ENCODE measurements at regions of chr4 and their contacts with region 1.

Region 1: DNA sequence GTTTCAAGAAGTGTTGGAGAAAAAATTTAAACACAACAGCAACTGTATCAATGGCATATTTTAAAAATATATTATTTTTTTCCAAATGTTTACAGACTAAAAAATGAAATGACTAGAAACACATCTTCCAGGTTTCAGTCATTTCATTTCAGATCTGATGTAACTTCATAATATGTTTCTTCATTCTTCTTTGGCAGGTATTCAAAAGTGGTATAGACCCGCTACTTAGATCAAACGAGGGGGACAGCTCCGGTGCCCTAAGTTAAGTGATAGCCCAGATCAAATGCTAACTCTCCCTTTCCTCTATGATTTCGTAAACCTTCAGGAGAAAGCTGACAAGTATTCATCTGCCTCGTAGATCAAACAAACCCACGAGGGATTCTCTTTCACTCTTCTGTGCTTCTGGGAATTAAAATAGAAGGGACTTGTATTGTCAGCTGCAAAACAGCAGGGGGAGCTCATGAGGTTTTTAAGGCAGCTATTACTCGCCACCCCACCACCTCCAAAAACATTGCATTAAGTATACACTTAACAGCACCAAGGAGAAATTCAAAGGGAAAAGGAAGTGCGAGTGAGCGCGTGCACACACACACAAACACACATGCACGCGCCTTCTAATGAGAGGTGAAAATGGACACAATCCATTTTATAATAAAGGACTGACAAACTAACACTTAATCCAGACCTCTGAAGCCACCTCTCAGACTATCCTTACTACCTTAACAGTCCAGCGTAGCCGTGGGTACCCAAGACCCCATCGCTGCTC is 21.4 kb downstream of the HELT start:
- DNase-seq: peak in 12 of 14 experiments; percentile 6 to 73 (median 22)
- ATAC-seq: peak; percentile 72
- H3K4me3 ChIP-seq: no peak overlapping the region
- H3K4me3 Mint-ChIP-seq: no peak overlapping the region
- H3K27ac ChIP-seq: no peak overlapping the region
- H3K27ac Mint-ChIP-seq: no peak overlapping the region
- H3K4me1 ChIP-seq: peaks cover 3% of the 10 kb centered on the region
- H3K4me1 Mint-ChIP-seq: peaks cover 5% of the 10 kb centered on the region
- H3K27me3 ChIP-seq: peaks cover 0 to 2% of the 10 kb centered on the region in 2 experiments
- H3K27me3 Mint-ChIP-seq: peaks cover 23% of the 10 kb centered on the region
- CTCF ChIP-seq: peak; percentile 79

Region 2: GRCh38 chr4:184896868-184897715 is 142.6 kb before region 1 on chr4:
- CTCF ChIA-PET with region 1: no interaction called
- POLR2A ChIA-PET with region 1: no interaction called
- intact Hi-C with region 1: no loop called
- DNase-seq: peak in 2 of 14 experiments; percentile 60 to 73
- ATAC-seq: no peak
- H3K4me3 ChIP-seq: no peak overlapping the region
- H3K4me3 Mint-ChIP-seq: no peak overlapping the region
- H3K27ac ChIP-seq: no peak overlapping the region
- H3K27ac Mint-ChIP-seq: no peak overlapping the region
- H3K4me1 ChIP-seq: peaks cover 3% of the 10 kb centered on the region
- H3K4me1 Mint-ChIP-seq: no peaks in the 10 kb centered on the region
- H3K27me3 ChIP-seq: peaks cover 6 to 7% of the 10 kb centered on the region in 2 experiments
- H3K27me3 Mint-ChIP-seq: peaks cover 19% of the 10 kb centered on the region
- CTCF ChIP-seq: no peak

Region 3: GRCh38 chr4:185096032-185096653 is 56.5 kb after region 1 on chr4:
- CTCF ChIA-PET with region 1: interaction called, 3 read pairs
- POLR2A ChIA-PET with region 1: no interaction called
- intact Hi-C with region 1: loop called in 1 of 2 experiments (anchors 5 kb)
- DNase-seq: peak in 5 of 14 experiments; percentile 4 to 49 (median 36)
- ATAC-seq: no peak
- H3K4me3 ChIP-seq: no peak overlapping the region
- H3K4me3 Mint-ChIP-seq: no peak overlapping the region
- H3K27ac ChIP-seq: no peak overlapping the region
- H3K27ac Mint-ChIP-seq: no peak overlapping the region
- H3K4me1 ChIP-seq: no peaks in the 10 kb centered on the region
- H3K4me1 Mint-ChIP-seq: no peaks in the 10 kb centered on the region
- H3K27me3 ChIP-seq: peaks cover 11 to 15% of the 10 kb centered on the region in 2 experiments
- H3K27me3 Mint-ChIP-seq: peaks cover 47% of the 10 kb centered on the region
- CTCF ChIP-seq: peak; percentile 57

Region 4: GRCh38 chr4:185134307-185134869 is 94.7 kb after region 1 on chr4:
- CTCF ChIA-PET with region 1: interaction called, 5 read pairs
- POLR2A ChIA-PET with region 1: interaction called, 6 read pairs
- intact Hi-C with region 1: loop called (anchors 1 to 5 kb)
- DNase-seq: peak in 3 of 14 experiments; percentile 55 to 71 (median 66)
- ATAC-seq: peak; percentile 66
- H3K4me3 ChIP-seq: no peak overlapping the region
- H3K4me3 Mint-ChIP-seq: no peak overlapping the region
- H3K27ac ChIP-seq: no peak overlapping the region
- H3K27ac Mint-ChIP-seq: no peak overlapping the region
- H3K4me1 ChIP-seq: no peaks in the 10 kb centered on the region
- H3K4me1 Mint-ChIP-seq: no peaks in the 10 kb centered on the region
- H3K27me3 ChIP-seq: peaks cover 6 to 7% of the 10 kb centered on the region in 2 experiments
- H3K27me3 Mint-ChIP-seq: peaks cover 62% of the 10 kb centered on the region
- CTCF ChIP-seq: peak; percentile 87

Region 5: DNA sequence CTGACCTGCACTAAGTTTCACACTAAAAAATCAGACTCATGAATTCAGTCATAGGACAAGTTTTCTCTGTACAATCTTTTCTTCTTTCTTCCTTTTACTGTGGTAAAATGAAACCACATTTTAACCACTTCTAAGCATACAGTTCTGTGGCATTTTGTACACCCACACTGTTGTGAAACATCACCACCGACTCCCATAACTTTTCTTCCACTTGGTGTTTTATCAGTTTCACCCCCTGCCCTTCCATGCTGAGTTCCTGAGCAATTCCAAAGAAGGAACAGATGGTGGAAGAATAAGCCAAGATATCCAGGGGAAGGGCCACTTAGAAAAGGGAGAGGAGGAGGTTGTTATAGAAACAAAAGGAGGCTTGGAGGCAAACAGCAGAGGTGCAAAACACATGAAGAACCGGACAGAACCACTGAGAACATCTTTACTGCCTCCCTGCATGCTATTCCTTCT is 125.9 kb after region 1 on chr4:
- CTCF ChIA-PET with region 1: no interaction called
- POLR2A ChIA-PET with region 1: no interaction called
- intact Hi-C with region 1: no loop called
- DNase-seq: peak in 3 of 14 experiments; percentile 66 to 75 (median 71)
- ATAC-seq: peak; percentile 88
- H3K4me3 ChIP-seq: no peak overlapping the region
- H3K4me3 Mint-ChIP-seq: peak overlapping the region; percentile 49
- H3K27ac ChIP-seq: no peak overlapping the region
- H3K27ac Mint-ChIP-seq: peak overlapping the region; percentile 60
- H3K4me1 ChIP-seq: peaks cover 10% of the 10 kb centered on the region
- H3K4me1 Mint-ChIP-seq: peaks cover 31% of the 10 kb centered on the region
- H3K27me3 ChIP-seq: no peaks in the 10 kb centered on the region
- H3K27me3 Mint-ChIP-seq: peaks cover 12% of the 10 kb centered on the region
- CTCF ChIP-seq: no peak

Region 6: DNA sequence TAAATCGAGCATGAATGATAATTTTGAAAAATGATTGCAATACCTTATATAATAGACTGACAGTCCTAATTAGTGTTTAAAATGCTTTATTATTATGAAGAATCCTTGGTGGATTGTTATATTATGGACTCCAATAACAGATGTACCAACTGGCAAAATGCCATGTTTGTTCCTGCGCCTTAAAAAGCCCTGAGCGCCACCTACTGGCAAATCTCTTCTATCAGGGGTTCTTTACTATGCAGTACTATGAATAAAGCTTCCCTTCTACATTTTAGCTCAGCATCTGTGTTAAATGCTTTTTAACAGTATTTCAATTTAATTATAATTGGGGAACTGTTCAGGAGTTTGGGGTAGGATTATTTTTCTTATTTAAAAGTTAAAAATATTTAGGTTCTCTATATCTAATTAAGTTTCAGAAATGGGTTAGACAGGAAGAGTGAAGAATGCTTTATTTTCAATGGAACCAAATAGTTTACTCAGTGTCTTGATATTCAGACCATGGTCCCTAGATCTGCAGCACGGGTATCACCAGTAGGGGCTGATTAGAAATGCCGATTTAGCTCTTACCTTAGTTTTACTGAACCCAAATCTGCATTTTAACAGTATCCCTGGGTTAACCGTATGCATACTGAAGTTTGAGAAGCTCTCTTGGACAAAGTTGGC is 144.1 kb after region 1 on chr4:
- CTCF ChIA-PET with region 1: interaction called, 4 read pairs
- POLR2A ChIA-PET with region 1: interaction called, 3 read pairs
- intact Hi-C with region 1: loop called (anchors 1 kb)
- DNase-seq: peak; percentile 54 to 91 (median 70)
- ATAC-seq: peak; percentile 67
- H3K4me3 ChIP-seq: no peak overlapping the region
- H3K4me3 Mint-ChIP-seq: no peak overlapping the region
- H3K27ac ChIP-seq: no peak overlapping the region
- H3K27ac Mint-ChIP-seq: no peak overlapping the region
- H3K4me1 ChIP-seq: peaks cover 13% of the 10 kb centered on the region
- H3K4me1 Mint-ChIP-seq: peaks cover 57% of the 10 kb centered on the region
- H3K27me3 ChIP-seq: no peaks in the 10 kb centered on the region
- H3K27me3 Mint-ChIP-seq: no peaks in the 10 kb centered on the region
- CTCF ChIP-seq: peak; percentile 93

Region 7: DNA sequence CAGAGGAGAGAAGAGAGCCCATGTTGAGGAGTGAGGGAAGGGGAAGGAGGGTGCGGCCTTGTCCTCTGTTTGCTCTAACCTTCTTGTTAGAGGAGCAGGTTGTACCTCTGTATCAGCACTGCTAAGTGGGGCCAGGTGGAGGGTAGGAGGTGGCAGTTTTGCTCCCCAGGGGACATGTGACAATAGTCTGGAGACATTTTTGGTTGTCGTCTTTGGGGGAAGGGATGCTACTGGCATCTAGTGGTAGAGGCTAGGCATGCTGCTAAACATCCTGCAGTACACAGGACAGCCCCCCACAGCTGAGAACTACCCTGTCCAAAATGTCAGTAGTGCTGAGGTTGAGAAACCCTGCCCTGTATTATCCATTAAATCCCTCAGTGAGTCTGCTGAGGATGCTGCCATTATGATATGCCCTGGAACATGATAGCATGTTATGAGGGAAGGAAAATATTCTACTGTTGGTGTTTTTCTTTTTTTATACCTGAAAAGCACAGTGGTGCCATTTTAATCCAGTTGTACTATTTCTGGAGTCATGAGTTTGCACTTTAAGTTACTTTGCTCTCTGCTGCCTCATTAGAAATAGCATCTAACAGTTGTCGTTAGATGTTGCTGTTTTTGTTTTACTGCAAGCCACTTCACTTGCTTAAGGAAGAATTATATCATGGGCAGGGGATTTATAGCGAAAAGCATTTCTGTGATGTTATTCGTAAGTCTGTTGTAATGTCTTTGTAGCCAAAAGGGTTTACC is 265.4 kb after region 1 on chr4:
- CTCF ChIA-PET with region 1: no interaction called
- POLR2A ChIA-PET with region 1: no interaction called
- intact Hi-C with region 1: loop called in 1 of 2 experiments (anchors 5 kb)
- DNase-seq: peak in 9 of 14 experiments; percentile 1 to 66 (median 9)
- ATAC-seq: peak; percentile 82
- H3K4me3 ChIP-seq: no peak overlapping the region
- H3K4me3 Mint-ChIP-seq: no peak overlapping the region
- H3K27ac ChIP-seq: no peak overlapping the region
- H3K27ac Mint-ChIP-seq: no peak overlapping the region
- H3K4me1 ChIP-seq: no peaks in the 10 kb centered on the region
- H3K4me1 Mint-ChIP-seq: peaks cover 3% of the 10 kb centered on the region
- H3K27me3 ChIP-seq: no peaks in the 10 kb centered on the region
- H3K27me3 Mint-ChIP-seq: no peaks in the 10 kb centered on the region
- CTCF ChIP-seq: no peak

Region 8: DNA sequence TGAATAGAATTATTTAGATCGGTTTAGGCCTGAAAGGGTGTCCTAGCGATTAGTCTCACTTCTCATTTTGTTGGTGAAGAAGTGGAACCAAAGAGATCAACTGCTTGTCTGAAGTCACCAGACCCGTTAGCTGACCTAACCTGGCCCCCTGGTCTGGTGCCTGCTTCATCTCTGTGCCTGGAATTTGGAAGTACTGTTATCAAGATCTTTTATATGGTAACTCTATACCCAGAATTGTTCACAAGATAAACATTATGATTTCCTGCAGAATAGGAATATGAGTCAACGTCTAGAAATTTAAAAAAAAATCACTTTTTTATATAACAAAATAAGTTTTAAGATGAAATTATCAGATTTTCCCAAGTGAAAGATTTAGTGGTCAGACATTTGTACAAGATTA is 318.8 kb after region 1 on chr4:
- CTCF ChIA-PET with region 1: no interaction called
- POLR2A ChIA-PET with region 1: no interaction called
- intact Hi-C with region 1: no loop called
- DNase-seq: no peak
- ATAC-seq: no peak
- H3K4me3 ChIP-seq: no peak overlapping the region
- H3K4me3 Mint-ChIP-seq: no peak overlapping the region
- H3K27ac ChIP-seq: no peak overlapping the region
- H3K27ac Mint-ChIP-seq: no peak overlapping the region
- H3K4me1 ChIP-seq: no peaks in the 10 kb centered on the region
- H3K4me1 Mint-ChIP-seq: no peaks in the 10 kb centered on the region
- H3K27me3 ChIP-seq: no peaks in the 10 kb centered on the region
- H3K27me3 Mint-ChIP-seq: no peaks in the 10 kb centered on the region
- CTCF ChIP-seq: no peak

Region 9: GRCh38 chr4:185597532-185598188 is 558.0 kb after region 1 on chr4:
- CTCF ChIA-PET with region 1: interaction called, 4 read pairs
- POLR2A ChIA-PET with region 1: interaction called, 3 read pairs
- intact Hi-C with region 1: loop called (anchors 2 kb)
- DNase-seq: peak; percentile 50 to 82 (median 62)
- ATAC-seq: peak; percentile 74
- H3K4me3 ChIP-seq: no peak overlapping the region
- H3K4me3 Mint-ChIP-seq: no peak overlapping the region
- H3K27ac ChIP-seq: no peak overlapping the region
- H3K27ac Mint-ChIP-seq: no peak overlapping the region
- H3K4me1 ChIP-seq: no peaks in the 10 kb centered on the region
- H3K4me1 Mint-ChIP-seq: no peaks in the 10 kb centered on the region
- H3K27me3 ChIP-seq: peaks cover 0 to 4% of the 10 kb centered on the region in 2 experiments
- H3K27me3 Mint-ChIP-seq: peaks cover 33% of the 10 kb centered on the region
- CTCF ChIP-seq: peak; percentile 99

Measured in CD4-positive, alpha-beta T cell (primary cell).